ENCODE measurements at regions of chr10 and their contacts with region 1.

Region 1: GRCh38 chr10:13440185-13441061 is 88.4 kb downstream of the BEND7 start:
- DNase-seq: peak; percentile 66 to 84 (median 74)
- ATAC-seq: peak; percentile 97
- H3K4me3 ChIP-seq: no peak overlapping the region
- H3K4me1 ChIP-seq: peaks cover 12% of the 10 kb centered on the region
- CTCF ChIP-seq: peak; percentile 76

Region 2: DNA sequence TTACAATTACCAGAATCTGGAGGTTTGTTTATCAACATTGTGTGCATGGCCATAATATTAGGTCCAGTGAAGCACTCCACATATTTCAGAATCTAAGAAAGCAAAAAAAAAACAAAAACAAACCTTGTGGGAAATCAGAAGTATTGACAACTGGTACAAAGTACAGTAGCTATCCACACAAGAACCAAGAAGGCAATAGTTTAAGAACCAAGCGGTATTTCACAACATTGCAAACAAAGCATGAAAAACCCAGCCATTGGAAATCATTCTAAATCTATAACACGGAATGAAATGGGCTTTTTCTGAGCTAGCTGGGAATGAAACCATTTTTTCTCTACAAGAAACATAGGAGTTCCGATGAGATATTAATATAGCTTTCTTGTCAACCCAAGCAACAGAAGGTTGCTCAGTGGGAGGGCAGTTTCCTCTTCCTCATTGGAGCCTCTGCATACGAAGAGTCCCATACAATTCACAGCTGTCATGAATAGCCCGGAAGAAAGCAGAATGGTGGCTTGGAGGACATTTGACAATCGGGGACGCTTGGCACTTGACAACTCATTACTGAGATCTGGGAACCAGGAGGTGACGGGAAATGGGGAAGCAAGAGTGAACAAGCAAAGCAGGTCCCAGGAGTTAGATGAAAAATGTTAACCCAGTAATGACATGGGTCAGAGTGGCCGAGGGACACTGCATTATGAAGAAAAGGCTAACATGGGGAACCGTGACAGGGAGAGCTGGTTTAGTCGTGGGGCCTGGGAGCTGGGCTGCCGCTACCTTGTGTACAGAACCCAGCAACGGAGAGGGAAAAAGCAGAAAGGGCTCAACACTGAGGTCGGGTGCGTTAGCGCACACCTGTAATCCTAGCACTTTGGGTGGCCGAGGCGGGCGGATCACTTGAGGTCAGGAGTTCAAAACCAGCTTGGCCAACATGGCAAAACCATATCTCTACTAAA is 148.3 kb before region 1 on chr10:
- intact Hi-C with region 1: no loop called
- DNase-seq: no peak
- ATAC-seq: no peak
- H3K4me3 ChIP-seq: no peak overlapping the region
- H3K4me1 ChIP-seq: no peaks in the 10 kb centered on the region
- CTCF ChIP-seq: no peak

Region 3: GRCh38 chr10:13371897-13372470 is 68.4 kb before region 1 on chr10:
- intact Hi-C with region 1: loop called (anchors 2 to 10 kb)
- DNase-seq: peak in 2 of 3 donors; percentile 62 to 76
- ATAC-seq: peak; percentile 100
- H3K4me3 ChIP-seq: no peak overlapping the region
- H3K4me1 ChIP-seq: no peaks in the 10 kb centered on the region
- CTCF ChIP-seq: peak; percentile 81